ENCODE measurements at regions of chr7 and their contacts with region 1.

Region 1: GRCh38 chr7:28408960-28409715 is 3.2 kb upstream of the CREB5 start:
- DNase-seq: peak; percentile 98
- H3K4me3 Mint-ChIP-seq: peak overlapping the region; percentile 83
- H3K27ac Mint-ChIP-seq: peak overlapping the region; percentile 88
- H3K4me1 Mint-ChIP-seq: peaks cover 41% of the 10 kb centered on the region
- H3K27me3 Mint-ChIP-seq: no peaks in the 10 kb centered on the region
- CTCF ChIP-seq: no peak

Region 2: GRCh38 chr7:28488061-28488791 is 79.1 kb after region 1 on chr7:
- CTCF ChIA-PET with region 1: interaction called, 3 read pairs
- intact Hi-C with region 1: loop called (anchors 5 kb)
- DNase-seq: peak; percentile 71
- H3K4me3 Mint-ChIP-seq: no peak overlapping the region
- H3K27ac Mint-ChIP-seq: peak overlapping the region; percentile 74
- H3K4me1 Mint-ChIP-seq: peaks cover 36% of the 10 kb centered on the region
- H3K27me3 Mint-ChIP-seq: no peaks in the 10 kb centered on the region
- CTCF ChIP-seq: no peak